Panc1 (cell line): ENCODE measurements at regions of chr2 and their contacts with region 1.

Region 1: GRCh38 chr2:20446917-20447436 is at the start of gene RHOB:
- DNase-seq: peak; percentile 90
- ATAC-seq: peak; percentile 91
- H3K4me3 ChIP-seq: peak within 1 kb of the TSS; percentile 73 to 81
- H3K27ac ChIP-seq: peak within 1 kb of the TSS; percentile 76
- H3K4me1 ChIP-seq: peaks cover 41% of the 10 kb centered on the region
- H3K27me3 ChIP-seq: no peaks in the 10 kb centered on the region
- CTCF ChIP-seq: no peak
- total RNA-seq, gene RHOB: 38.9 TPM

Region 2: GRCh38 chr2:20027705-20028434 is 419.1 kb before region 1 on chr2:
- CTCF ChIA-PET with region 1: no interaction called
- POLR2A ChIA-PET with region 1: no interaction called
- in situ Hi-C with region 1: no loop called
- intact Hi-C with region 1: no loop called
- DNase-seq: no peak
- ATAC-seq: no peak
- H3K4me3 ChIP-seq: no peak overlapping the region
- H3K27ac ChIP-seq: no peak overlapping the region
- H3K4me1 ChIP-seq: 0 out of 2 replicates have a peak, but pooled peaks cover 5% of the 10 kb centered on the region
- H3K27me3 ChIP-seq: no peaks in the 10 kb centered on the region
- CTCF ChIP-seq: no peak

Region 3: GRCh38 chr2:20411361-20411894 is 35.5 kb before region 1 on chr2:
- CTCF ChIA-PET with region 1: interaction called, 10 read pairs
- POLR2A ChIA-PET with region 1: interaction called, 13 read pairs
- in situ Hi-C with region 1: no loop called
- intact Hi-C with region 1: no loop called
- DNase-seq: peak; percentile 72
- ATAC-seq: peak; percentile 100
- H3K4me3 ChIP-seq: no peak overlapping the region
- H3K27ac ChIP-seq: no peak overlapping the region
- H3K4me1 ChIP-seq: no peaks in the 10 kb centered on the region
- H3K27me3 ChIP-seq: no peaks in the 10 kb centered on the region
- CTCF ChIP-seq: peak; percentile 89

Region 4: DNA sequence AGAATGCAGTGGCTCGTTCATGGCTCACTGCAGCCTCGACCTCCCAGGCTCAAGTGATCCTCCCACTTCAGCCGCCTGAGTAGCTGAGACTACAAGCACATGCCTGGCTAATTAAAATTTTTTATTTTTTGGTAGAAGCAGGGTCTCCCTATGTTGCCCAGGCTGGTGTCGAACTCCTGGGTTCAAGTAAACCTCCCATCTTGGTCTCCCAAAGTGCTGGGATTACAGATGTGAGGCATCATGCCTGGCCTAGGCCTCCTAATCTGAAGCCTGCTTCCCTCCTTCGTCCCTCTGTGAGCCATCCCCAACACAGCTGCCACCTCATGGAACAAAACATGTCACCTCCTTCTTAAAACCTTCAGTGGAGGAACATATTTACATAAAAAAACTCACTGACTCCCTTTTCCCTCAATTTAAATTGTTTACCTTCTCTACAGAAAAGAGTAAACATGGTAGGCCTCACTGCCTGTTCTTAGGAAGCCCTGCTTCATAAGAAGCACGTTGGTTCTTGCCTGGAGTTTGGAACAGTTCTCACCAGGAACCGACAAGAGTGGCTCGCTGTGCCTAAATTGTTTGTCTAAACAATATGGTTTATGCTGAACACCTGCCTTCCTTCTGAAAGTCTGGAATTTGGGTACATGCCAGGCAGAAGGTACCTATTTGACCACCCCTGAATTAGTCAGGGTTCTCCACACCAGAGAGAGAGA is 12.2 kb before region 1 on chr2:
- CTCF ChIA-PET with region 1: no interaction called
- POLR2A ChIA-PET with region 1: no interaction called
- in situ Hi-C with region 1: no loop called
- intact Hi-C with region 1: no loop called
- DNase-seq: no peak
- ATAC-seq: no peak
- H3K4me3 ChIP-seq: no peak overlapping the region
- H3K27ac ChIP-seq: no peak overlapping the region
- H3K4me1 ChIP-seq: peaks cover 16% of the 10 kb centered on the region
- H3K27me3 ChIP-seq: no peaks in the 10 kb centered on the region
- CTCF ChIP-seq: no peak

Region 5: DNA sequence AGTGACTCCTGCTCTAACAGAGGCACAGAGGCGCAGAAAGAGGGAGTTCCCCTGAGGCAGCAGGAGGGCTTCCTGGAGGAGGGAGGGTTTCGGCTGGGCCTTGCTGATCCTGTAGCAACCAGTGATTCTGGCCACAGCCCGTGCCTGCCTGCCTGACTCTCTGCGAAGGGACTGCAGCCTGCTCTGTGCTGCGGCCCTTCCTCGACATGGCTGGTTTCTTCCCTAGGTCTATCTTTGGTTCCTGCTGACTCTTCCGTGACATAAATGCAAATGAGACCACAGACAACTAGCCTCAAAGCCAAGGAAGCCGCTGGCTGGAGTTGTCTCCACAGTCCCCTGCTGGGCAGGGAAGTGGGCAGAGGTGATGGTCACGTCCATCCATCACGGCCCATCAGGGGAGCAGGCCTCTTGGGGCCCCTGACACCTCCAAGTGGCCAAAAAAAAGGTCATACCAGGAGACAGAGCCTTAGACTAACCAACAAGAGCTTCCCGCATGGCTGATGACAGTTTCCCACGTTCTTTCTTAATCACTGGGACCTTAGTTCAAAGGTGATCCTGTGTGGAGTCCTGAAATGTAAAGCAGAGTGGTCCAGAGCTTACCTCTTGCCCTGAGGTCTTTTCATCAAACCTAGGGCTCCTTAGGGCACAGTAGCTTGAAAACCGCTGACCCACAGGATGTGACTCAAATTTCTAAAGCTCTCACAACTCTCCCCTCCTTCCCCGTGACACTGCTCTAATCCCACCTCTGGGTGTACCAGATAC is 148.6 kb after region 1 on chr2:
- CTCF ChIA-PET with region 1: interaction called, 3 read pairs
- POLR2A ChIA-PET with region 1: interaction called, 6 read pairs
- in situ Hi-C with region 1: no loop called
- intact Hi-C with region 1: loop called (anchors 10 kb)
- DNase-seq: no peak
- ATAC-seq: peak; percentile 17; the same call in 1 of the 2 replicates
- H3K4me3 ChIP-seq: no peak overlapping the region
- H3K27ac ChIP-seq: peak overlapping the region; percentile 51; the same call in 1 of the 2 replicates
- H3K4me1 ChIP-seq: peaks cover 32% of the 10 kb centered on the region
- H3K27me3 ChIP-seq: no peaks in the 10 kb centered on the region
- CTCF ChIP-seq: no peak

Region 6: GRCh38 chr2:20642055-20642971 is 195.3 kb after region 1 on chr2:
- CTCF ChIA-PET with region 1: interaction called, 11 read pairs
- POLR2A ChIA-PET with region 1: interaction called, 8 read pairs
- in situ Hi-C with region 1: loop called (anchors 25 kb)
- intact Hi-C with region 1: no loop called
- DNase-seq: no peak
- ATAC-seq: peak; percentile 96
- H3K4me3 ChIP-seq: no peak overlapping the region
- H3K27ac ChIP-seq: no peak overlapping the region
- H3K4me1 ChIP-seq: no peaks in the 10 kb centered on the region; the same call in 1 of the 2 replicates
- H3K27me3 ChIP-seq: no peaks in the 10 kb centered on the region
- CTCF ChIP-seq: peak; percentile 97

Region 7: DNA sequence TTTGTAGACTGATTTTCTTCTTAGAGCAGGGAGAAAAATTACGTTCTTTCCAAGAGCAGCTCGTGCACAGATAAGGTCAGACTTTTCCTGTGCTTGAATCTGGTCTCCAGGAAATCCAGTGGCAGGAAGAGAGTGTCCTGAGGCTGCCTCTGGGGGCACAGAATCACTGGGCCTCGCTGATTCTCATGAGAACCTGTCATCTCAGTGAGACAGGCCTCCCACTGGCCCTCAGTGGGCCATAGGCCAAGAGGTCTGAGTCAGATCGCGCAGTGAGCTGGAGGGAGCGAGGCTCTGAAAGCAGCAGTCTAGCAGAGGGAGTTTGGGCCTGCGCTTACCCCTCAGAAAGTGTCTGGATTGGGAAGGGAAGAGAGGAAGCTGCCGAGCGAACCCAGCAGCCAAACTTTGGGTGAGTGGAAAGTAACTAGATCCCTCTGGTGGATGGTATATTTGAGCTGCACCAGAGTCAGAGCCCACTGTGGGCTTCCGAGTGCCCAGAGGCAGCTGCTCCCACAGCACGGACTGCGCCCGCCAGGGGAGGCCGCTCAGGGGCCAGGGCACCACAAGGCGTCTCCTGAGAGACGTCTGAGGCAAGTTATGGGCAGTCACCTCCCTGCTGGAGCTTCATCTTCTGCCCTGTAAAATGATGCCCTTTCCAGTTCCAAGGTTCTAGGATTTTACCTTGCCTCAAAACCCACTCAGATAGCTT is 228.2 kb after region 1 on chr2:
- CTCF ChIA-PET with region 1: no interaction called
- POLR2A ChIA-PET with region 1: interaction called, 18 read pairs
- in situ Hi-C with region 1: no loop called
- intact Hi-C with region 1: no loop called
- DNase-seq: no peak
- ATAC-seq: peak; percentile 39
- H3K4me3 ChIP-seq: no peak overlapping the region
- H3K27ac ChIP-seq: no peak overlapping the region
- H3K4me1 ChIP-seq: no peaks in the 10 kb centered on the region
- H3K27me3 ChIP-seq: no peaks in the 10 kb centered on the region
- CTCF ChIP-seq: no peak